ENCODE measurements at regions of chr1 and their contacts with region 1.

Region 1: GRCh38 chr1:49465486-49466185 is 558.1 kb downstream of the AGBL4 start:
- DNase-seq: no peak
- H3K4me3 ChIP-seq: no peak overlapping the region
- H3K27ac ChIP-seq: no peak overlapping the region
- H3K4me1 ChIP-seq: no peaks in the 10 kb centered on the region
- H3K27me3 ChIP-seq: no peaks in the 10 kb centered on the region
- CTCF ChIP-seq: no peak

Region 2: GRCh38 chr1:47931394-47931793 is 1534.2 kb before region 1 on chr1:
- CTCF ChIA-PET with region 1: no interaction called
- POLR2A ChIA-PET with region 1: no interaction called
- intact Hi-C with region 1: no loop called
- DNase-seq: peak; percentile 10
- H3K4me3 ChIP-seq: no peak overlapping the region
- H3K27ac ChIP-seq: no peak overlapping the region
- H3K4me1 ChIP-seq: peaks cover 5% of the 10 kb centered on the region
- H3K27me3 ChIP-seq: no peaks in the 10 kb centered on the region
- CTCF ChIP-seq: 0 out of 2 replicates have a peak, but pooled peaks have one; percentile 26

Region 3: DNA sequence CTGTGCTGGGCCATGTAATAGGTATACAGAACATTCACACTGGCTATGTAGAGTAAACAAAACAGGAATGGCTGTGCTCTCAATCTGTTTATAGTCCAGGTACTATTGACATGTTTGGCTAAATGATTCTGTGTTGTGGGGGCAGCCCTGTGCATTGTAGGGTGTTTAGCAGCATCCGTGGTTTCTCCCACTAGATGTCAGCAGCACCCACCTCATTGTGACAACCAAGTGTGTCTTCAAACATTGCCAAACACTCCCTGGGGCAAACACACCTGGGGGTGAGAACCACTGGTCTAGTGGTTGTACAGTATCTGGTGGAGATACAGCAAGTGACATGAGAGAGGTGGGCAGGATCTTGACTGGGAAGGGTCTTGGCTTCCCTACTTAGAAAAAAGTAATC is 913.2 kb before region 1 on chr1:
- CTCF ChIA-PET with region 1: no interaction called
- POLR2A ChIA-PET with region 1: no interaction called
- intact Hi-C with region 1: no loop called
- DNase-seq: peak; percentile 24
- H3K4me3 ChIP-seq: no peak overlapping the region
- H3K27ac ChIP-seq: no peak overlapping the region
- H3K4me1 ChIP-seq: no peaks in the 10 kb centered on the region
- H3K27me3 ChIP-seq: no peaks in the 10 kb centered on the region
- CTCF ChIP-seq: peak; percentile 45

Region 4: GRCh38 chr1:49036700-49037099 is 428.9 kb before region 1 on chr1:
- CTCF ChIA-PET with region 1: interaction called, 12 read pairs
- POLR2A ChIA-PET with region 1: no interaction called
- intact Hi-C with region 1: no loop called
- DNase-seq: peak; percentile 39
- H3K4me3 ChIP-seq: no peak overlapping the region
- H3K27ac ChIP-seq: no peak overlapping the region
- H3K4me1 ChIP-seq: peaks cover 6% of the 10 kb centered on the region
- H3K27me3 ChIP-seq: no peaks in the 10 kb centered on the region
- CTCF ChIP-seq: peak; percentile 32; the same call in 1 of the 2 replicates

Region 5: DNA sequence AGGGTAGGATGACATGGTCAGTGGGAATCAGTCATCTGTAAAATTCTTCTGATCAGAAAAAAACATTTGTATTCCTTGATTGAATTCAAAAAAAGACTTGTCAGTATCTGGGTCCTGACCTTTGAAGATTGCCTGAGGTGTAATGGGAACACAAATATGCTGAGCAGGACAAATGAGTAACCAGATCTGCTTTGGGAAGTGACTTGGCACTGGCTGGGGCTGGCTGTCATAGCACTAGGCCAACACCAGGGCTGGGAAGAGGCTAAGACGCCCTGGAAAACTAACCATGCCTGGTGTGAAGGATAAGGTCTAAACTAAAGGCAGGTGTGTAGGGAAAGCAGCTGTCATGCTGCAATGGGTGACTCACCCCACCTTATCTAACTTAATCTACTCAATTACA is 236.1 kb before region 1 on chr1:
- CTCF ChIA-PET with region 1: no interaction called
- POLR2A ChIA-PET with region 1: no interaction called
- intact Hi-C with region 1: no loop called
- DNase-seq: no peak
- H3K4me3 ChIP-seq: no peak overlapping the region
- H3K27ac ChIP-seq: no peak overlapping the region
- H3K4me1 ChIP-seq: no peaks in the 10 kb centered on the region
- H3K27me3 ChIP-seq: no peaks in the 10 kb centered on the region
- CTCF ChIP-seq: no peak

Region 6: DNA sequence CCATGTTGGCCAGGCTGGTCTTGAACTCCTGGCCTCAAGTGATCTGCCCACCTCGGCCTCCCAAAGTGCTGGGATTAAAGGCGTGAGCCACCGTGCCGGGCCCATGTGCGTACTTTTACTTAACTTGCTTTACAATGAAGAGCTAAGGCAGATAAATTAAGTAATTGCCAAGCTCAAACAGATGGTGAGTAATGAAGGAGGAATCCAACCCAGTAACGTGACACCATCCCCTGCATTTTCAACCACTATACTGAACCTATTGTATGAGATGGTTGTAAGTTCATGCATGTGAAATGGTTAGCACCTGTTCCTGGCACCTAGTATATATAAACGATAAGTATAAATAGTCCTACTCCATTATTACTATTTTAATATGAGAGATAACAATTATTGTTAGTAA is 101.0 kb before region 1 on chr1:
- CTCF ChIA-PET with region 1: no interaction called
- POLR2A ChIA-PET with region 1: no interaction called
- intact Hi-C with region 1: no loop called
- DNase-seq: peak; percentile 38
- H3K4me3 ChIP-seq: no peak overlapping the region
- H3K27ac ChIP-seq: no peak overlapping the region
- H3K4me1 ChIP-seq: no peaks in the 10 kb centered on the region
- H3K27me3 ChIP-seq: no peaks in the 10 kb centered on the region
- CTCF ChIP-seq: no peak